ENCODE measurements at regions of chr2 and their contacts with region 1.

Region 1: DNA sequence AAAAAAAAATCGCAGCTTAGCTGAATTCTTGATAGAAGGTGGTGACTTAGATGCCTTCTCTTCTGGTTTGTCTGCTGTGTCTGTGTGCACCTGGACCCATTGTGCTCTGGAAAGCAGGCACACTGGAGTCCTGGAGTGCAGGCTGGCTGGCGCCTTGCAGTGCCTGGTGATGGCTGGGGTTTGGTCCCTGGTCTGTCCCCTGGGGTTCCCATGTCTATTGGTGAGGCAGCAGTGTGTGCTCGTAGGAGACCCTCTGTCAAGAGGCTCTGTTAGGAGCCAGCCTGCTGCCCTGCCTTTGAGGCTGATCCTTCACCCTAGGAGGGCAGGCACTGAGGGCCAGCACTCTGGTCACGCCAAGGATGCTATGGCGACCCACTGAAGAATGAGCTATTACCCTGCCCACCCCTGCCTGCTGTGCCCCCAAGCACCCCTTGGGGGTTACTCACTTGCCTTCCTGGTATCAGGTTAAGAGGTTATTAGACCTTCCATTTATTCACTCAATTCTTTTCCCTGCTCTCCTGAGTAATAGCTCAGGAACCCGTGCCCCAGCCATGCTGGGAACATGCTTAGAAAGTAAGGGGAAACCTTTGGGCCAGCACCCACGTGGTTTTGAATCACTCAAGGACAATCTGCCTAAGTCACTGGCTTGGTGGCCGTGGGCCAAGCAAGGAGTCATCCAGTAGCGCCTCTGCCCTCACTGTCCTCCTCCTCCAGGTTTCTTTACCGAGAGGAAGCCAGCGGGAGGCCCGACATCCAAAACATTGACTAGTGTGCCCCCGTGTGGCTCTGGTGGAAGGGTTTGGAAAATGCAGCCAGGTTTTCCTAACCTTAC is 284.5 kb downstream of the PRKCE start:
- DNase-seq: peak; percentile 94
- ATAC-seq: peak; percentile 91

Region 2: DNA sequence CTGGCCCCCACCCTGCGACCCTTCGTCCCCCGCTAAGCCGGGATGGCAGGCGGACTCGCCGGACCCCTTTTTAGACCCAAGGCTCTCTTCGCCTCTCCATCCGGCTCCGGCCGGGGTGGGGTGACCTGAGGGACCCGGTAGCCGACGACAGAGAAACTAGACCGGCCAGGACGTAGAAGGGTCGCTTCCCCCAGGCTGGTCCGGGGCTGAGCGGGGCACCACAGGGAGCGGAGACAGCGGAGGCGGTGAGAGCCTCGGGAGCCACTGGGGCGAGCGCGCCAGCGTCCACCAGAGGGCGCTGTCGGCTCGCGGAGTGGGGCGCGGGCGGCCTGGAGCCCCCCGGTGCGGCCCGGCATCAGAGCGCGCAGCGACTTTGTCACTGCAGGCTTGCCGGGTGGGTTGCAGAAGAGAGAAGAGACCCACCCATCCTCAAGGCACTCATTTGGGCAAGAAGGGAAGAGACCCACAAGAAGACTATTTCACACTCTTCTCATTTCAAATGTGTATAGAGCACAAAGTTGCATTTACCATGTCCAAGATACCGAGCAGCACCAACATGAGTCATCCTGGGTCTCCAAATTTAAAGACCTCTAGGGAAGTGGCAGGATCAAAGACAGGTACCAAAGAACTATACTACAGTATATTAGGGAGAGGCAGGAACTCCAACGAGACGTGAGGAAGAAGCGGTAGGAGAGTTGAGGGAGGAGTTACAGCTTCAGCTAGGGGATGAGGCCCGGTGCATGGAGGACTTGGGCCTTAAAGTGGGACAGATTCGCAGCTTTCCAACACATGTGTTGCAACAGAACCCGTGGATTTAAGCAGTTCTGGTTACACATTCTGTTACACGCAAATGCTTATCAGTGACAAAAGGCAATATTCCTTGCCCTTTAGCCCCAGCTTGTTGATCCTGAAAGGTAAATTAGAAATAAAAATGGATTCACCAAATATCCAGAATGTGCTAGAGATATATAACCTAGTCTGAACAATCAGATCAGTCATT is 292.2 kb before region 1 on chr2:
- intact Hi-C with region 1: loop called (anchors 5 kb)
- DNase-seq: peak; percentile 86
- ATAC-seq: peak; percentile 97

Measured in left ventricle myocardium superior (tissue), 1 donor.